ENCODE measurements at regions of chr3 and their contacts with region 1.

Region 1: GRCh38 chr3:183490670-183491069 is 62.3 kb upstream of the MCF2L2 start:
- DNase-seq: peak; percentile 84 to 95 (median 86)
- H3K4me3 ChIP-seq: peak overlapping the region in 1 of 7 experiments; percentile 2
- H3K27ac ChIP-seq: no peak overlapping the region
- H3K4me1 ChIP-seq: peaks cover 2 to 31% (median 17%) of the 10 kb centered on the region in 4 experiments
- H3K27me3 ChIP-seq: no peaks in the 10 kb centered on the region

Region 2: DNA sequence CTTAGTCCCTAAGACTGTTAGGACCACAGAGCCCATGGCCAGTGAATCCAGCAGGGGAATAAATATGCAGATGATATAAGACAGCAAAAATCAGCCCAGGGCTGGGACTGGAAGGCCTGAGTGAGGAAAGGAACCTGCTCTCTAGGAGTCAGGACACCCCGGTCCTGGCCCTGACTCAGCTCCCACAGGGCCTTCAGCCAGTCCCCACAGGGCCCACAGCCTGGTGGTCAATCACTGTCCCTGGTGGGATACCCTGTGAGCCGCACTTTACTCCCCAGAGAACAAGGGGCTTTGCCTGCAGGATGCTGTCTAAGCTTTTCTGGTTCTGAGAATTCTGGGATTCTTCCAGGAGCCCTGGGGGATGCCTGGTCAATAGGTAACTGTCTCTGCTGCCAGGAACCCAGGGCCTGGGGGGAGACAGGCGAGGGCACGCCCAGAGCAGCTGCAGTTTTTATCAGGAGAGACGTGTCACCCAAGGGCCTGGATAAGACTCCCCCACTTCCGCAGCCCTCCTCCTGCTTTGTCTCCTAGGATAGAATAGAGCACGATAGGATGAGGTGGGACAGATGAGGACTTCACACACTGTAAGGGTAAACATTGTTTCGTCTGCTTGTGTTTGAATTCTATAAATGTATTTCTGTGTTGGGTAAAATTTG is 12.7 kb before region 1 on chr3:
- CTCF ChIA-PET with region 1: interaction called, 36 read pairs
- POLR2A ChIA-PET with region 1: interaction called, 5 read pairs
- DNase-seq: no peak
- H3K4me3 ChIP-seq: no peak overlapping the region
- H3K27ac ChIP-seq: no peak overlapping the region
- H3K4me1 ChIP-seq: peaks cover 0 to 11% (median 9%) of the 10 kb centered on the region in 4 experiments
- H3K27me3 ChIP-seq: no peaks in the 10 kb centered on the region

Measured in common myeloid progenitor, CD34-positive (primary cell).